ENCODE measurements at regions of chr11 and their contacts with region 1.

Region 1: GRCh38 chr11:102666331-102666957 is 39.1 kb downstream of the MMP27 start:
- DNase-seq: peak; percentile 13
- H3K4me3 ChIP-seq: no peak overlapping the region
- H3K27ac ChIP-seq: no peak overlapping the region
- H3K27me3 ChIP-seq: no peaks in the 10 kb centered on the region
- CTCF ChIP-seq: peak; percentile 96

Region 2: GRCh38 chr11:102204174-102204573 is 462.3 kb before region 1 on chr11:
- CTCF ChIA-PET with region 1: no interaction called
- POLR2A ChIA-PET with region 1: no interaction called
- DNase-seq: no peak
- H3K4me3 ChIP-seq: no peak overlapping the region
- H3K27ac ChIP-seq: no peak overlapping the region
- H3K27me3 ChIP-seq: no peaks in the 10 kb centered on the region
- CTCF ChIP-seq: no peak

Region 3: GRCh38 chr11:102287964-102288724 is 378.3 kb before region 1 on chr11:
- CTCF ChIA-PET with region 1: interaction called, 19 read pairs
- POLR2A ChIA-PET with region 1: no interaction called
- DNase-seq: peak; percentile 55
- H3K4me3 ChIP-seq: peak overlapping the region; percentile 38
- H3K27ac ChIP-seq: no peak overlapping the region
- H3K27me3 ChIP-seq: no peaks in the 10 kb centered on the region
- CTCF ChIP-seq: peak; percentile 72

Region 4: DNA sequence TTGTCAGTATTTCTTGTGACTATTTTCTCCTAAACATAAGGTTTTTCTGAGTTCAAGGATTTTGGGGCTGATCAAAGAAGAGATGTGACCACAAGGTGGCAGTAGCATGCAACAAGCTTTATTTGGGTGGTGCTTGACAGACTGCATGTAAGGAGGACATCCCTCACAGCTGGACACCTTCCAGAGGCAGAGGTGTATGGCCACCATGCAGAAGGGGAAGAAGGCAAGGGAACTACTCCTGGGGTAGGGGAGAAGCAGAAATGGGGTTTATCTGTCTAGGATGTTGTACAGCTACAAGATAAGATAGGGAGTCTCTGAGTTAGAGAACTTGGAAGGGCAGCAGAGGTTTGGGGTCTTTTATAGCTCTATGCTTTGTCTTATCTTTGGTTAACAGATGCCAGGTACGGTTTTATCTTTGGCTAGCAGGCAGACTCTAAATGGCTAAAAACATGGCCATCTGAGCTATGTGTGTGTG is 324.6 kb before region 1 on chr11:
- CTCF ChIA-PET with region 1: interaction called, 102 read pairs
- POLR2A ChIA-PET with region 1: no interaction called
- DNase-seq: peak; percentile 68
- H3K4me3 ChIP-seq: no peak overlapping the region
- H3K27ac ChIP-seq: no peak overlapping the region
- H3K27me3 ChIP-seq: no peaks in the 10 kb centered on the region
- CTCF ChIP-seq: peak; percentile 81

Region 5: DNA sequence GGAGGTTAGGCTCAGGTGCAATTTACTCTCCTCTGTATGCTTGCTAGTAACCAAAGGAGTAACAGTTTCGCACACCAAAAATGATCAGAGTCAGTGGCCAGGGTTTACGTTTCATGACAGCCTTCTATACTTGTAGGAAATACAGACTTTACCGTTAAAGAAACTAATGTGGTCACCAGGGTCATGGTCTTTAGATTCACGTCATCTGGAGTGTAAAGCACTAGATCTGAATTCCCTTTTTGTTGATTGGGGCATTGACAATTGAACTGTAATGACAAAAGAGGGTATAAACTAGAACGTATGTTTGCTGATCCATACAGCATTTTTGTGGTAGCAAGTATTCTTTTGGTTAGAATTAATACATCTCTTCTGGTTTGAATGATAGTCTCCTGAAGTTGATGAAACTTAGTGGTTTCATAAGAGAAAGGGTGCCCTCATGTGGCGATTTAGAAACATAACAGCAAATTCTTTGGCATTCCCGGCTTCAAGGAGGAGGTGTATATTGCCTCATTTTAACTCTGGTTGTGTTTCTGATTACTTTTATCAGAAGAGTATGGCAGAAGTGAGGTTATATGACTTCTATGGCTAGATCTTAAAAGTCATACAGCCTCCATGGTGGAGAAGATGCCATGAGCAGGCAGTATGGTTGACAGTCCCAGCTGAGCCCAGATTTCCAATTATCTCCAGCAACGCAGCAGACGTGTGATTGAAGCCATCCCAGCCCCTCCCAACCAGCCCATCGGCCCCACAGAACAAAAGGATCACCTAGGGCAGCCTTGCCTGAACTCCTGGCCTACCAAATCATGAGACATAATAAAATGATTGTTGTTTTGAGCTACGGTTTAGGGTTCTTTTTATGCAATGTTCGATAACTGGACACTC is 171.0 kb before region 1 on chr11:
- CTCF ChIA-PET with region 1: interaction called, 17 read pairs
- POLR2A ChIA-PET with region 1: no interaction called
- DNase-seq: peak; percentile 75
- H3K4me3 ChIP-seq: no peak overlapping the region
- H3K27ac ChIP-seq: no peak overlapping the region
- H3K27me3 ChIP-seq: peaks cover 3% of the 10 kb centered on the region
- CTCF ChIP-seq: peak; percentile 62

Region 6: GRCh38 chr11:102640946-102641345 is 25.5 kb before region 1 on chr11:
- CTCF ChIA-PET with region 1: interaction called, 14 read pairs
- POLR2A ChIA-PET with region 1: no interaction called
- DNase-seq: no peak
- H3K4me3 ChIP-seq: no peak overlapping the region
- H3K27ac ChIP-seq: no peak overlapping the region
- H3K27me3 ChIP-seq: no peaks in the 10 kb centered on the region
- CTCF ChIP-seq: no peak

Measured in AG04450 (cell line).